ENCODE measurements at regions of chr6 and their contacts with region 1.

Region 1: DNA sequence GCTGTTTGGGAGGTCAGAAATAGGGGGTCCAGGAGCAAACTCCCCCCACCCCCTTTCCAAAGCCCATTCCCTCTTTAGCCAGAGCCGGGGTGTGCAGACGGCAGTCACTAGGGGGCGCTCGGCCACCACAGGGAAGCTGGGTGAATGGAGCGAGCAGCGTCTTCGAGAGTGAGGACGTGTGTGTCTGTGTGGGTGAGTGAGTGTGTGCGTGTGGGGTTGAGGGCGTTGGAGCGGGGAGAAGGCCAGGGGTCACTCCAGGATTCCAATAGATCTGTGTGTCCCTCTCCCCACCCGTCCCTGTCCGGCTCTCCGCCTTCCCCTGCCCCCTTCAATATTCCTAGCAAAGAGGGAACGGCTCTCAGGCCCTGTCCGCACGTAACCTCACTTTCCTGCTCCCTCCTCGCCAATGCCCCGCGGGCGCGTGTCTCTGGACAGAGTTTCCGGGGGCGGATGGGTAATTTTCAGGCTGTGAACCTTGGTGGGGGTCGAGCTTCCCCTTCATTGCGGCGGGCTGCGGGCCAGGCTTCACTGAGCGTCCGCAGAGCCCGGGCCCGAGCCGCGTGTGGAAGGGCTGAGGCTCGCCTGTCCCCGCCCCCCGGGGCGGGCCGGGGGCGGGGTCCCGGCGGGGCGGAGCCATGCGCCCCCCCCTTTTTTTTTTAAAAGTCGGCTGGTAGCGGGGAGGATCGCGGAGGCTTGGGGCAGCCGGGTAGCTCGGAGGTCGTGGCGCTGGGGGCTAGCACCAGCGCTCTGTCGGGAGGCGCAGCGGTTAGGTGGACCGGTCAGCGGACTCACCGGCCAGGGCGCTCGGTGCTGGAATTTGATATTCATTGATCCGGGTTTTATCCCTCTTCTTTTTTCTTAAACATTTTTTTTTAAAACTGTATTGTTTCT is at the start of gene VEGFA:
- DNase-seq: peak; percentile 86
- H3K4me3 ChIP-seq: peak within 1 kb of the TSS; percentile 75 to 86 (median 81)
- H3K27ac ChIP-seq: peak within 1 kb of the TSS; percentile 71
- H3K4me1 ChIP-seq: peaks cover 18% of the 10 kb centered on the region
- H3K27me3 ChIP-seq: no peaks in the 10 kb centered on the region
- CTCF ChIP-seq: peak; percentile 96 to 98
- POLR2A ChIP-seq: peak; percentile 33
- total RNA-seq, gene VEGFA: 16.6 and 18.1 TPM in 2 replicates

Region 2: DNA sequence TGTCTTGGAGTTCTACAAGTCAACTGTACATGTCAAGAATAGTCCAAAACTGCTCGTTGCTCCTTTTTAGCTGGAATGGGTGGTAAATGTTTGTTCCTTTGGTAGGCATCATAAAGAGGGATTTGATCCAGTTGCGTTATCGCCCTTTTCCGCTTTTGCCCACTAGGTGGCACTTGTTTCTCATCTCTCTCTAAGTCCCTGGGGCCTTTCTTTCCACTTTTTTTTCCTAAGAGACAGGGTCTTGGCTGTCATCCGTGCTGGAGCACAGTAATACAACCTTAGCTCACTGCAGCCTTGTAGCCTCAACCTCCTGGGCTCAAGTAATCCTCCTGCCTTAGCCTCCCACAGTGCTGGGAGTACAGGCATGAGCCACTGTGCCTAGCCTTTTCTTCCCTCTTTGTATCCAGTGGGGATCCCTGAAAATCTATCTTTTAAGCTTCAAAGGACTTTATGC is 161.4 kb before region 1 on chr6:
- CTCF ChIA-PET with region 1: interaction called, 4 read pairs
- POLR2A ChIA-PET with region 1: no interaction called
- dilution Hi-C with region 1: no loop called
- intact Hi-C with region 1: loop called (anchors 5 kb)
- DNase-seq: peak; percentile 82
- H3K4me3 ChIP-seq: no peak overlapping the region
- H3K27ac ChIP-seq: no peak overlapping the region
- H3K4me1 ChIP-seq: peaks cover 2% of the 10 kb centered on the region
- H3K27me3 ChIP-seq: no peaks in the 10 kb centered on the region
- CTCF ChIP-seq: peak; percentile 84 to 89
- POLR2A ChIP-seq: no peak

Region 3: DNA sequence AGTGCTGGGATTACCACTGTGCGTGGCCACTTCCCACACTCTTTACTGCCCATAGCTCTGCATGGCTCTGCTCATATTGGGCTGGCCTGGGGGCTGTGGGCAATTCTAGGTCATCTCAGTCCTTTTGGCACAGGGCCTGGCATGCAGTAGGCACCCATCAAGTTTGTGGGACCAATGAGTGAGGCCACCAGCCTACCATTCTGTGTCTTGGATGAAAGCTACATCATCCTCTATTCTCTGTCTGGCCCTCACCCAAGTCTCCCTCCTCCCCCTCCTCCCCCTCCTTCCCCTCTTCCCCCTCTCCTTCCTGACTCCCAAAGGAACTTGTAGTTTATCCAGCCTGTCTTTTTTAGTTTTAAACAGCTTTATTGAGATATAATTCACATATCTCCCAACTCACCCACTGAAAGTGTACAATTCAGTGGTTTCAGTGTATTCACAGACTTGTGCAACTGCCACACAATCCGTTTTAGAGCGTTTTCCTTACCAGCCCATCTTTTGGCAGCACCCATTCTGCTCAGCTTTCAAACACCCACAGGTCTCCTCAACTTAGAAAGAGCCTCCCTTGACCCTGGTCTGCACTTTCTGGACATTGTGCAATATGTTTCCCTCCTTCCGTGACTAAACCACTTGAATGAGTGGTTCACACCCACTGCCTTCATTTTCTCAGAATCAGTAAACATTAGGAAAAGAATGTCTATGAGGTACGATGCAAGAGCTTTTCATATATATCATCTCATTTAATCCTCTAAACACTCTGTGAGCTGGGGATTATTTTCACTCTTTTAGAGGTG is 60.7 kb before region 1 on chr6:
- CTCF ChIA-PET with region 1: interaction called, 7 read pairs
- POLR2A ChIA-PET with region 1: no interaction called
- dilution Hi-C with region 1: no loop called
- intact Hi-C with region 1: loop called (anchors 5 kb)
- DNase-seq: peak; percentile 56
- H3K4me3 ChIP-seq: no peak overlapping the region
- H3K27ac ChIP-seq: no peak overlapping the region
- H3K4me1 ChIP-seq: peaks cover 33% of the 10 kb centered on the region
- H3K27me3 ChIP-seq: no peaks in the 10 kb centered on the region
- CTCF ChIP-seq: no peak
- POLR2A ChIP-seq: no peak

Region 4: GRCh38 chr6:43758617-43759050 is 11.1 kb before region 1 on chr6:
- CTCF ChIA-PET with region 1: interaction called, 21 read pairs
- POLR2A ChIA-PET with region 1: no interaction called
- dilution Hi-C with region 1: no loop called
- intact Hi-C with region 1: no loop called
- DNase-seq: peak; percentile 21
- H3K4me3 ChIP-seq: no peak overlapping the region
- H3K27ac ChIP-seq: no peak overlapping the region
- H3K4me1 ChIP-seq: peaks cover 5% of the 10 kb centered on the region
- H3K27me3 ChIP-seq: peaks cover 8 to 14% of the 10 kb centered on the region in 2 experiments
- CTCF ChIP-seq: peak; percentile 60 to 81
- POLR2A ChIP-seq: no peak

Region 5: GRCh38 chr6:44002593-44003344 is 233.0 kb after region 1 on chr6:
- CTCF ChIA-PET with region 1: interaction called, 7 read pairs
- POLR2A ChIA-PET with region 1: no interaction called
- dilution Hi-C with region 1: no loop called
- intact Hi-C with region 1: loop called (anchors 5 kb)
- DNase-seq: peak; percentile 25
- H3K4me3 ChIP-seq: peak overlapping the region; percentile 2 to 41 (median 38)
- H3K27ac ChIP-seq: no peak overlapping the region
- H3K4me1 ChIP-seq: peaks cover 2% of the 10 kb centered on the region
- H3K27me3 ChIP-seq: peaks cover 26 to 27% of the 10 kb centered on the region in 2 experiments
- CTCF ChIP-seq: peak in 1 of 2 donors; percentile 18
- POLR2A ChIP-seq: no peak

Measured in endothelial cell of umbilical vein (primary cell).